GM13977 (cell line): ENCODE measurements at regions of chr9 and their contacts with region 1.

Region 1: DNA sequence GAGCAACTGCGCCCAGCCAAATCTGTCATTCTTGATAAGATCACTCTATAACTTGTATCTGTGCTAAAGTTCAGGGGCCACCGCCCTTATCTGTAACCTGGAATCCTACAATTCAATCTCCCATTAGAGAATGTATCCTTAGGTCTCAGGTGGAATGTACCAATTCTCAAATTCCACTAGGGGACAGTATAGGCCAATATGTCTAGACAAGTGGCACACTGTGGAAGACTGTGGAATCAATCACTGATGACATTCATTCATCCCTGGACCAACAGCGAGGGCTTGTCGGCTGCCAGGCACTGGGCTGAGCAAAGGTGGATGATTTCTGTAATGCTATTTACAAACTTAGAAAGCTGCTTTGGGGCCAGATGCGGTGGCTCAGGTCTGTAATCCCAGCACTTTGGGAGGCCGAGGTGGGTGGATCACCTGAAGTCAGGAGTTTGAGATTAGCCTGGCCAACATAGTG is 28.7 kb upstream of the MEGF9 start:
- DNase-seq: peak; percentile 72
- CTCF ChIP-seq: peak; percentile 59

Region 2: DNA sequence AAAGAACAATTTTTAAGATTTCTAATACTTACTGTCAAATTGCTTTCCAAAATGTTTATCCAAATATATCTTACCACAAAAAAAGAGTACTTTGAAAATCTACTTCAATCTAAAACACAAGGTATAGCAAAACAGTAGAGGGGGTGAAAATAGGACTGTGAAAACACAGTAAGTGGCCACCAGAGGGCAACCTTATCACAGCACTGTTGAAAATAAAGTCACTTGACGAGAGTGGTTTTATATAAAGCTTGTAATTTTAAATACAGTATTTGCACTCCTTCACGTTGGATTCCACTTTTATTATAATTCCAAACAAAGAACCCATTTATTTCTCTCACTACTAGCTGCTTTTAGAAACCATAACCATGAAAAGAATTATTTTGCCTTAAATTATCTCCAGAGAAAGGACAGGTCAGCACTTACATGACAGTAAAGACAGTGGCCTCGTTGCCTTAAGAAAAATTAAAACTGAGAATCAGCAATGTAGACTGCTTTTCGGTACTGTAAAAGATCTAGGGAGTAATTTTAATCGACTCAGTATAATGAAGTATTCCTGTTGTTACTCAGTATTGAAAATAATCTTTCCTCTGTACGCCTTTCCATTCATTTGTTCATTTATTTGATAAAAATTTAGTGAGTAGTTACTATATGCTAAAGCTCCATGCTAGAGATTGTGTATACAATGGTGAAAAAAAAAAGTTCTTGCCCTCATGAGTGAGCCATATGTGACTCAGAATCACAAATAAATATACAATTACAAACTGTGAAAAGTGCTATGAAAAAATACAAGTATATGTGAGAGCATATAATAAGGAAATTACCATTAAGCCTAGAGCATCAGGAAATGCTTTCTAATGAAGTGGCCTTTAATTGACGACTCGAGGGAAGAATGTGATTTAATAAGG is 123.0 kb before region 1 on chr9:
- in situ Hi-C with region 1: loop called (anchors 10 kb)
- DNase-seq: peak; percentile 65
- CTCF ChIP-seq: peak; percentile 76

Region 3: DNA sequence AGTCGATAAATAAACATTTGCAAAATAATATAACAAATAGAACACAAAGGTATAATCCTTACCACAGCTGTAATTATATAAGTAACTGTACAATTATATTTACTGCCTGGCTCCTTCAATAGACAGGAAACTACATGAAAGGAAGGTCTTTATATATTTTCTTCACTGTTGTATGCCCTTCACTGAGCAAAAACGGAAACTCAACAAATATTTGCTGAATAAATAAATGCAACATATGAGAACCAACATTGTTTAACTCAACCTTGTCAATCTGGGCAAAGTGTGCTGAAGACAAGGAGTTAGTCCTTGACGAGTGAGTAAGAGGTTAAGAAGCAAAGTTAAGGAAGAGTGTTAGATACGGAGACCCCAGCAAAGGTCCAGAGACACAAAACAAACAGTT is 77.1 kb after region 1 on chr9:
- in situ Hi-C with region 1: no loop called
- DNase-seq: no peak
- CTCF ChIP-seq: no peak

Region 4: GRCh38 chr9:120856700-120857099 is 113.7 kb after region 1 on chr9:
- in situ Hi-C with region 1: no loop called
- DNase-seq: no peak
- CTCF ChIP-seq: no peak

Region 5: GRCh38 chr9:121399883-121400607 is 657.1 kb after region 1 on chr9:
- in situ Hi-C with region 1: loop called (anchors 25 kb)
- DNase-seq: peak; percentile 37
- CTCF ChIP-seq: peak; percentile 57